ENCODE measurements at regions of chr21 and their contacts with region 1.

Region 1: DNA sequence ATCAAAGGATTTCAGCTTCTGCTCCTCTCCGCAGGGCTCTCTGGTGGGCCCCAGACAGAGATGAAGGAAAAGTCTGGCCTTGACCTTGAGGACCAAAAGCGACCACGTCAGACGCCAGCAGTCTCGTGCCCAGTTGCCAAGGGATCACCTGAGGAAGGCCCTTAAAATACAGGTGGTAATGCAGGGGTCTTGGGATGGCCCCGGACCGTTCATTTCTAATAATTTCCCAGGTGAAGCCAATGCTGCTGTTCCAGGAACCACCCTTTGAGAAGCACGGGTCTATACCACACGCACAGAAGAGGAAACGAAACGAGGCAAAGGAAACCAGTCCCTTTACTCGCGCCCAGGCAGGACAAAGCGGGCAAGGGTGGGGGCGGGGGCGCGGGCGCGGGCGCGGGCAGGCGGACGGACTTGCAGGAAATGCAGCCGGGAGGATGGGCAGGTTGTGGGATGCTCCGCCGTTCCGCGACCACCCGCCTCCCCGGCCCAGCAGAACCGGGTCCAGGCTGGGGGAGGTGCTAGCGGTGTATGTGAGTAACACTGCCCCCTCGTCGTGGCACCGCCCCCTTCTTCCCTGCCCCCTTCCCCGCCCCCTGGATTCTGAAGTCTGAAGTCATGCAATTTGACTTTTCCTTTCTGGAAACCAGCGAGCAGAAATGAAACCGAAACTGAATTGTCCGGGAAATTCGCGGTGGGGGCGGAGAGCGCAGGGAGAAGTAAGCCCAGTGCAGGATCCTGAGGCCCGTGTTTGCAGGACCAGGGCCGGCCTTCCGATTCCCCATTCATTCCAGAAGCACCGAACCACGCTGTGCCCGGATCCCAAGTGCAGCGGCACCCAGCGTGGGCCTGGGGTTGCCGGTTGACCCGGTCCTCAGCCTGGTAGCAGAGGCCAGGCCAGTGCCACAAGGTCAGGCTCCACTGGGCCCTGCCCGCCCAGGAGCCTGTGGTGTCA is 5.9 kb upstream of the MX1 start:
- DNase-seq: peak; percentile 84
- ATAC-seq: peak; percentile 97
- H3K4me3 ChIP-seq: peak overlapping the region; percentile 54
- H3K27ac ChIP-seq: peak overlapping the region; percentile 60
- H3K4me1 ChIP-seq: no peaks in the 10 kb centered on the region
- H3K27me3 ChIP-seq: no peaks in the 10 kb centered on the region
- CTCF ChIP-seq: no peak
- POLR2A ChIP-seq: no peak
- RAD21 ChIP-seq: no peak

Region 2: GRCh38 chr21:41361786-41362604 is 58.2 kb before region 1 on chr21 and contains the start of gene MX2:
- CTCF ChIA-PET with region 1: no interaction called
- POLR2A ChIA-PET with region 1: no interaction called
- dilution Hi-C with region 1: no loop called
- in situ Hi-C with region 1: no loop called
- intact Hi-C with region 1: loop called (anchors 5 kb)
- DNase-seq: peak; percentile 81
- ATAC-seq: peak; percentile 83
- H3K4me3 ChIP-seq: peak within 1 kb of the TSS; percentile 3; the same call in 1 of the 2 replicates
- H3K27ac ChIP-seq: peak within 1 kb of the TSS; percentile 61
- H3K4me1 ChIP-seq: peaks cover 8% of the 10 kb centered on the region
- H3K27me3 ChIP-seq: peaks cover 3% of the 10 kb centered on the region
- CTCF ChIP-seq: no peak
- POLR2A ChIP-seq: no peak
- RAD21 ChIP-seq: no peak
- total RNA-seq, gene MX2: 0.54 and 0.56 TPM in 2 replicates